Activated CD4-positive, alpha-beta memory T cell treated with anti-CD3 and anti-CD28 coated beads for 36 hours (primary cell): ENCODE measurements at regions of chr6 and their contacts with region 1.

Region 1: GRCh38 chr6:167047554-167047953 is 48.4 kb downstream of the CEP43 start:
- DNase-seq: peak; percentile 88
- H3K4me3 Mint-ChIP-seq: peak overlapping the region; percentile 60
- H3K27ac Mint-ChIP-seq: peak overlapping the region; percentile 76
- H3K4me1 Mint-ChIP-seq: peaks cover 48% of the 10 kb centered on the region
- H3K27me3 Mint-ChIP-seq: no peaks in the 10 kb centered on the region

Region 2: GRCh38 chr6:166999145-166999883 is 48.2 kb before region 1 on chr6 and contains the start of gene CEP43:
- CTCF ChIA-PET with region 1: interaction called, 13 read pairs
- POLR2A ChIA-PET with region 1: interaction called, 6 read pairs
- intact Hi-C with region 1: loop called (anchors 1 kb)
- DNase-seq: peak; percentile 90
- H3K4me3 Mint-ChIP-seq: peak within 1 kb of the TSS; percentile 85
- H3K27ac Mint-ChIP-seq: peak within 1 kb of the TSS; percentile 85
- H3K4me1 Mint-ChIP-seq: peaks cover 28% of the 10 kb centered on the region
- H3K27me3 Mint-ChIP-seq: no peaks in the 10 kb centered on the region
- total RNA-seq, gene CEP43: 19.5 to 21.3 TPM

Region 3: DNA sequence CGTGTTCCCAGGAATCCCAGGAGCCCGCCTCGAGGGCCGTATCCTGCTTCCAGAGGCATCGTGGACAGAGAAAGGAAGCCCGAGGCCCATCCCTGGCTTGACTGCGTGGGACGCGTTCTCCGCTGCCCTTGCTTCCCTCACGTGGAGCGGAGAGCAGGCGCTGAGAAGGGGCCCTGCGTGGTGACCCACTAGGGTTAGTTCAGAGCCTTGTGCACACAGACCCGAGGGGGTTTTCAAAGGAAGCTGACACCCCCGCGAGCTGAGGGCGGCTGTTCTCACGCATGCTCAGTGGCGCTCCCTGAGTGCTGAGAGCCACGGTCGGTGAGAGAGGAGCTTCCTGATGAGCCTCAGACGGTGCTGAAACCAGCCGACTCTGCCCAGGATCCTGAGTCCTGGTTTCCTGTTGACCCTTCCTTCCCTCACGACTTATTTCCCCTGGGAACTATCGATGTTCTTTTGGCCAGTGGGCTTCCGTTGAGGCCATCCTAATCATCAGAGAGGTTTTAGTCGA is 46.4 kb after region 1 on chr6:
- CTCF ChIA-PET with region 1: interaction called, 8 read pairs
- POLR2A ChIA-PET with region 1: interaction called, 9 read pairs
- intact Hi-C with region 1: loop called (anchors 5 kb)
- DNase-seq: peak; percentile 82
- H3K4me3 Mint-ChIP-seq: peak overlapping the region; percentile 55
- H3K27ac Mint-ChIP-seq: peak overlapping the region; percentile 67
- H3K4me1 Mint-ChIP-seq: peaks cover 67% of the 10 kb centered on the region
- H3K27me3 Mint-ChIP-seq: no peaks in the 10 kb centered on the region

Region 4: DNA sequence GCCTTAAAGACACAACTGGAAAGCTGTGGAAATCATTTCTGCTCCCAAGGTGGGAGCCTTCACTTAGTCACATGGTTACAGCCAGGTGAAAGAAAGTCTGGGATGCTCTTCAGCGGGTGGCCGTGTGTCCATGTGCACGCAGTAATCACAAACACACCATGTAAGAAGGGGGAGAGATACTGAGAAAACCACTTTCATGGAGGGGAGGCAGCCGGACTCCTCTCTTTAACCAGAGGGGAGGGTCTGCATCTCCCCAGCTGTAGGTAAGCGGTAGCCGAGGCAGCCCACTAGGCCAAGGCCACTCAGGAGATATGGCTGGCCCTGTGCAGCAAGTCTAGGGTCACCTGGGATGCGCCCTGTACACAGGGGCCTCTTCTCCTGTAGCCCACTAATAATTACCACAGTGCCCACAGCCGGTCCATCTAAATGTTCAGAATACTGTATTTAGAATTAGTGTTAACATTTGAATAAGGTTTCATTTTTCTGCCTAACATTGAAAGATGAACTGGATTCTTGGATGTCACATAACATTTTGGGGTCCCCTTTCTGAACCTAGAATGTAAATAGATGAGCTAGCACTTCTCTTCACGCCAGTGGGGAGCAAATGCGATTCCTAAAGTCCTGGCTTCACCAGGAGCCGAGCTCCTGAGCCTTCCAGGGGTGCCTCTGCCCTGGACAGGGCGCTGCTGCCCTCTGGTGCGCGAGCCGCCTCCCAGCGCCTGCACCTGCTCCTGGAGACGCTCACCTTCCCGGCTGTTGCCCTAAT is 94.3 kb after region 1 on chr6:
- CTCF ChIA-PET with region 1: interaction called, 11 read pairs
- POLR2A ChIA-PET with region 1: no interaction called
- intact Hi-C with region 1: no loop called
- DNase-seq: peak; percentile 71
- H3K4me3 Mint-ChIP-seq: no peak overlapping the region
- H3K27ac Mint-ChIP-seq: no peak overlapping the region
- H3K4me1 Mint-ChIP-seq: peaks cover 37% of the 10 kb centered on the region
- H3K27me3 Mint-ChIP-seq: no peaks in the 10 kb centered on the region

Region 5: GRCh38 chr6:167350731-167351655 is 303.4 kb after region 1 on chr6:
- CTCF ChIA-PET with region 1: interaction called, 8 read pairs
- POLR2A ChIA-PET with region 1: no interaction called
- intact Hi-C with region 1: loop called (anchors 2 kb)
- DNase-seq: peak; percentile 96
- H3K4me3 Mint-ChIP-seq: peak overlapping the region; percentile 80
- H3K27ac Mint-ChIP-seq: peak overlapping the region; percentile 95
- H3K4me1 Mint-ChIP-seq: peaks cover 23% of the 10 kb centered on the region
- H3K27me3 Mint-ChIP-seq: peaks cover 33% of the 10 kb centered on the region